Head of caudate nucleus (tissue), 42 donors: ENCODE measurements at regions of chr15 and their contacts with region 1.

Region 1: GRCh38 chr15:75727851-75728715 is 15.4 kb upstream of the CSPG4 start:
- DNase-seq: peak; percentile 55 to 87 (median 72)

Region 2: GRCh38 chr15:75801859-75802593 is 73.9 kb after region 1 on chr15:
- intact Hi-C with region 1: loop called (anchors 5 kb)
- DNase-seq: peak; percentile 37 to 91 (median 79)